ENCODE measurements at regions of chr18 and their contacts with region 1.

Region 1: GRCh38 chr18:9334329-9334972 is at the start of gene TWSG1:
- DNase-seq: peak; percentile 76 to 91 (median 88)
- H3K4me3 ChIP-seq: peak within 1 kb of the TSS; percentile 61 to 94 (median 87)
- H3K27ac ChIP-seq: peak within 1 kb of the TSS in 57 of 59 donors; percentile 39 to 93 (median 79)
- H3K27me3 ChIP-seq: no peaks in the 10 kb centered on the region
- CTCF ChIP-seq: peak in 52 of 56 donors; percentile 19 to 74 (median 46)
- total RNA-seq, gene TWSG1: 12.6 to 27.0 (median 18.1) TPM

Region 2: DNA sequence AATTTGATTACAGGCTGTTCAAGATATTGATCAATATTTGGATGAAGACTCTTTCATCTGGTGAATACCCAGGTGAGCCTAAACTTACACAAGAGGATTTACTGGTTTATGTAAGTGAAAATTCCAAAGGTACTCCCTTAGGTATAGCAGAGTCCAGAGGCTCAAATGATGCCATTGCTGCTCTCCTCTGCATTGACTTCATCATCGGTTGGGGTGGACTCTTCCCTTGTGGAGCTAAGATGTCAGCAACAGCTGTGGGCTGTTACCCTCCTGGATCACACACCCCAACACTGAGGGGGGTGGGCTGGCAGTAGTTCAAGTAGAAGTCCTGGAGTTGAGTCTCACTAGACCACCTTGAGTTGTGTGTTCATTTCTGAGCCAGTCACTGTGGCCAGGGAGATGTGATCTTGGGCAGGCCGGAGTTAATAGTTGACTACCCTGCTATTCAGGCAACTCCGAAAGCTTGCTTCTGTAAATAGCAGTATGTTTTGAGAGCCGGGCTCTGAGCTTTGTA is 1530.4 kb before region 1 on chr18:
- intact Hi-C with region 1: no loop called
- DNase-seq: no peak
- H3K4me3 ChIP-seq: no peak overlapping the region
- H3K27ac ChIP-seq: no peak overlapping the region
- H3K27me3 ChIP-seq: peaks cover 0 to 4% (median 0%) of the 10 kb centered on the region in 45 donors
- CTCF ChIP-seq: no peak

Region 3: GRCh38 chr18:9082711-9083510 is 251.5 kb before region 1 on chr18:
- intact Hi-C with region 1: loop called (anchors 5 to 10 kb)
- DNase-seq: no peak
- H3K4me3 ChIP-seq: no peak overlapping the region
- H3K27ac ChIP-seq: peak overlapping the region in 30 of 59 donors; percentile 2 to 68 (median 40)
- H3K27me3 ChIP-seq: no peaks in the 10 kb centered on the region
- CTCF ChIP-seq: no peak

Region 4: GRCh38 chr18:9136315-9137155 is 197.9 kb before region 1 on chr18 and contains the start of gene ANKRD12:
- intact Hi-C with region 1: loop called (anchors 2 to 5 kb)
- DNase-seq: peak; percentile 94 to 99 (median 97)
- H3K4me3 ChIP-seq: peak within 1 kb of the TSS; percentile 68 to 96 (median 86)
- H3K27ac ChIP-seq: peak within 1 kb of the TSS; percentile 92 to 100 (median 98)
- H3K27me3 ChIP-seq: no peaks in the 10 kb centered on the region
- CTCF ChIP-seq: peak in 21 of 56 donors; percentile 3 to 47 (median 23)
- total RNA-seq, gene ANKRD12: 136 to 273 (median 172) TPM

Region 5: DNA sequence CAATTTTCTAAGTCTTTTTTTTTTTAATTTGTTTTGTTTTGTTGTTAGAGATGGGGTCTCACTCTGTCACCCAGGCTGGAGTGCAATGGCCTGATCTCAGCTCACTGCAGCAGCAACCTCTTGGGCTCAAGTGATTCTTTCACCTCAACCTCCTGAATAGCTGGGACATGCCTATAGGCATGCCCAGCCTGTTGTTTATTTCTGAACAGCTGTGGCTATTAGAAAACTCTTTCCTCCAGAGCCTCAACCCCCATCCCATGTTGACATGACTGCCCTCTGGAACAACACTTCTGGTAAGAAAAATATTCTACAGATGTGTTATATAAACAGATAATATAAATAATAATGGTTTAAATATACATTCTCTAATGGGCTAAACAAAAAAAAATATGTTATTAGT is 44.3 kb before region 1 on chr18:
- intact Hi-C with region 1: no loop called
- DNase-seq: no peak
- H3K4me3 ChIP-seq: no peak overlapping the region
- H3K27ac ChIP-seq: no peak overlapping the region
- H3K27me3 ChIP-seq: no peaks in the 10 kb centered on the region
- CTCF ChIP-seq: no peak

Region 6: DNA sequence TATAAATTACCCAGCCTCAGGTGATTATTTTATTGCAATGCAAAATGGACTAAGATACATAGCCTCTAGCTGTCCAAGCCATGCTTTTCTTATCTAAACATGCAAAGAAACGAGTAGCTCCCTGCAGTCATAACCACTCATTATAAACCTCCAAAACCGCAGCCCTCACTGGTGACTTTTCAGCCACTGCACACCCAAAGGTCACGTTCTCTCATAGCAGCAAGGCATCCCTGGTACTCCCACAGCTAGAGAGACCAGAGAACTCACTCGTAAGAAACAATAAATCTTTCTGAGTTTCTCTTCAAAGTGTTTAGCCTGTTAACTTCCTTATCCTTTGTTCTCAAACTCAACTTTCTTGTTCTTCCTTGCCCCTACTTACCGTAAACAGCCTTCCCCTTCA is 112.4 kb after region 1 on chr18:
- intact Hi-C with region 1: no loop called
- DNase-seq: no peak
- H3K4me3 ChIP-seq: no peak overlapping the region
- H3K27ac ChIP-seq: no peak overlapping the region
- H3K27me3 ChIP-seq: no peaks in the 10 kb centered on the region
- CTCF ChIP-seq: no peak

Region 7: DNA sequence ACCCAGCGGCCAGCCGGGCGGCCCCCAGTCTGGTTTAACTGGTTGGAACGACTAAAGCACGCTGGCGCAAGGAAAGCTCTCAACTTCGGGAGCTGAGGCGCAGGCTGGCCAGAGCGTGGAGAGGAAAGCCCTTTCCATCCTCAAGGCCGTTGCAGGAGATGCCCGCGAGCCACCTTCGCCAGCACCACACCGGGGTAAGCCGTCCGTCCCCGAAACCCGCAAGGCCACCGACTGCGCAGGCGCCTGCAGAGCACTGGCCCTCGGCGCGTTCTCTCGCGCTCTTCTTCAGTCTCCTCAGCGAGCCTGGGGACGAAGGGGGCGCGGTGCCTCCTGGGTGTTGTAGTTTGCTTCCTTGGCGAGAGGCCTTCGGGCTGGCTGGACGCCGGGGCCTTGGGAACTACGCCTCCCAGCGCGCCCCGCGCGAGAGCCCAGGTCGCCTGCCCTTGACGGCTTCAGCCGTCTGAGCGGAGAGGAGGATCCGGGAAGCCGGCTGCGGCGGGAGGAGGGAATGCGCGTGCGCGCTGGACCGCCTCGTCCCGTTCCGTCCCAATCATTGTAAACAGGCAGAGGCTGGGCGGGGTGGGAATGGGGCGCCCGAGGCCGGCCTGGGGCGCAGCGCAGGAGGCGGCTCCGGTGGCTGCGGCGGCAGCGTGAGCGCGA is 140.7 kb after region 1 on chr18 and contains the start of gene RALBP1:
- intact Hi-C with region 1: loop called (anchors 2 kb)
- DNase-seq: peak; percentile 98 to 100 (median 100)
- H3K4me3 ChIP-seq: peak within 1 kb of the TSS; percentile 64 to 99 (median 95)
- H3K27ac ChIP-seq: peak within 1 kb of the TSS; percentile 86 to 99 (median 95)
- H3K27me3 ChIP-seq: no peaks in the 10 kb centered on the region
- CTCF ChIP-seq: peak in 50 of 56 donors; percentile 9 to 57 (median 38)
- total RNA-seq, gene RALBP1: 44.6 to 89.8 (median 64.5) TPM

Measured in dorsolateral prefrontal cortex (tissue), 120 donors.